Adrenal gland (tissue), 19 donors: ENCODE measurements at regions of chr17 and their contacts with region 1.

Region 1: DNA sequence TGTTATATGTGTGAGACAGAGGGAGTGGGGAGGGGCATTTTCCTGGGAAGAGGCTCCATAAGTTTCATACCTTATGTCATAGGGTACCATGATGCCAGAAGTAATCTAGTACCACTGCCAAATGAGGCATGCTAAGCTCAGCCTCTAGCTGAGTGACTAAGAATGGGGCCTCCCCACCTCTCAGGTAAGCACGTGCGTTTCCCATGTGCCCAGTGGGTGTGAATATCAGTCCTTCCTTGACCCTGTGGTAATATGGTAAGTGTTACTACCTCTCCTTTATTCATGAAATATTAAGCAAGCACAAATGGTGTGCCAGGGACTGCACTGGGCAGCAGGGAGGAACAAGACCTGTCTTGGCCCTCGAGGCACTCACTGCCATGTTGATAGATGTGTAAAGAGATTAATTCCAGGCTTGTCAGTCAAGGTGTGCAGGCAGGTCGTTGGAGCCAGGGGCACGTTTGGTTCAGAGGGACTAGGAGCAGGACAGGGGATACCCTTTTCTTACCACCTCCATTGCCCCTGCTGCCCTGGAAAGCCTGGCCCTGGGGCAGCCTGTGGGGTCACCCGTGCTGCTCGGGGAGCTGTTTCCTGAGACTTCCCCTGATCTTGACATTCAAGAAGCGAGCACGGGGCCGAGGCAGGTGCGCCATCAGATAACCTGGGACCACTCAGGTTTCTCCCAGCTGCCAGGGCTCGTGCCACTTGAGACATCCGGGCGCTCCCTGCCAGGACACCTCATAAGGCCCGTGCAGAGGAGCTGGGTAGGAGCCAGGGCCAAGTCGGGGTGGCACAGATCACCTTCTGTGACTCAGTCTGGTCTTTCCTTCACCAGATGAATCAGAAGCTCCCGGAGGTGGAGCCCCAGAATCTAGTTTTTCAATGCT is 8.8 kb downstream of the RSAD1 start:
- DNase-seq: peak; percentile 75 to 91 (median 86)
- H3K4me3 ChIP-seq: no peak overlapping the region
- H3K27ac ChIP-seq: peak overlapping the region in 3 of 5 donors; percentile 40 to 73 (median 43)
- H3K4me1 ChIP-seq: peaks cover 4 to 13% of the 10 kb centered on the region in 2 donors
- H3K27me3 ChIP-seq: no peaks in the 10 kb centered on the region
- CTCF ChIP-seq: no peak
- POLR2A ChIP-seq: no peak

Region 2: GRCh38 chr17:50541716-50542688 is 54.5 kb after region 1 on chr17:
- intact Hi-C with region 1: loop called (anchors 5 kb)
- DNase-seq: peak; percentile 84 to 91 (median 90)
- H3K4me3 ChIP-seq: peak overlapping the region in 2 of 4 donors; percentile 27 to 50
- H3K27ac ChIP-seq: peak overlapping the region; percentile 3 to 83 (median 79)
- H3K4me1 ChIP-seq: peaks cover 22 to 32% of the 10 kb centered on the region in 2 donors
- H3K27me3 ChIP-seq: no peaks in the 10 kb centered on the region
- CTCF ChIP-seq: peak in 2 of 6 experiments; percentile 15 to 23
- POLR2A ChIP-seq: peak; percentile 51 to 82

Region 3: GRCh38 chr17:50620858-50621257 is 133.4 kb after region 1 on chr17:
- intact Hi-C with region 1: loop called (anchors 5 to 10 kb)
- DNase-seq: no peak
- H3K4me3 ChIP-seq: no peak overlapping the region
- H3K27ac ChIP-seq: no peak overlapping the region
- H3K4me1 ChIP-seq: peaks cover 0 to 12% of the 10 kb centered on the region in 2 donors
- H3K27me3 ChIP-seq: no peaks in the 10 kb centered on the region
- CTCF ChIP-seq: no peak
- POLR2A ChIP-seq: no peak

Region 4: GRCh38 chr17:50765454-50766221 is 278.2 kb after region 1 on chr17:
- intact Hi-C with region 1: no loop called
- DNase-seq: peak in 2 of 7 donors; percentile 19 to 53
- H3K4me3 ChIP-seq: no peak overlapping the region
- H3K27ac ChIP-seq: no peak overlapping the region
- H3K4me1 ChIP-seq: peaks cover 0 to 13% of the 10 kb centered on the region in 2 donors
- H3K27me3 ChIP-seq: no peaks in the 10 kb centered on the region
- CTCF ChIP-seq: no peak
- POLR2A ChIP-seq: no peak